ENCODE measurements at regions of chr20 and their contacts with region 1.

Region 1: GRCh38 chr20:45880988-45881788 is at the start of gene ZSWIM1:
- DNase-seq: peak; percentile 99
- ATAC-seq: peak; percentile 98
- H3K4me3 Mint-ChIP-seq: peak within 1 kb of the TSS; percentile 94
- H3K27ac Mint-ChIP-seq: peak within 1 kb of the TSS; percentile 95
- H3K4me1 Mint-ChIP-seq: peaks cover 42% of the 10 kb centered on the region
- H3K27me3 Mint-ChIP-seq: no peaks in the 10 kb centered on the region
- total RNA-seq, gene ZSWIM1: 9.4 to 10.7 TPM

Region 2: GRCh38 chr20:45890985-45891983 is 10.1 kb after region 1 on chr20 and contains the starts of genes CTSA and NEURL2:
- CTCF ChIA-PET with region 1: interaction called, 10 read pairs
- POLR2A ChIA-PET with region 1: interaction called, 7 read pairs
- intact Hi-C with region 1: loop called (anchors 1 kb)
- DNase-seq: peak; percentile 94
- ATAC-seq: peak; percentile 80
- H3K4me3 Mint-ChIP-seq: peak within 1 kb of the TSS; percentile 89
- H3K27ac Mint-ChIP-seq: peak within 1 kb of the TSS; percentile 87
- H3K4me1 Mint-ChIP-seq: peaks cover 32% of the 10 kb centered on the region
- H3K27me3 Mint-ChIP-seq: no peaks in the 10 kb centered on the region
- total RNA-seq, gene CTSA: 36.4 to 45.6 TPM
- total RNA-seq, gene NEURL2: 1.2 to 1.9 TPM

Region 3: DNA sequence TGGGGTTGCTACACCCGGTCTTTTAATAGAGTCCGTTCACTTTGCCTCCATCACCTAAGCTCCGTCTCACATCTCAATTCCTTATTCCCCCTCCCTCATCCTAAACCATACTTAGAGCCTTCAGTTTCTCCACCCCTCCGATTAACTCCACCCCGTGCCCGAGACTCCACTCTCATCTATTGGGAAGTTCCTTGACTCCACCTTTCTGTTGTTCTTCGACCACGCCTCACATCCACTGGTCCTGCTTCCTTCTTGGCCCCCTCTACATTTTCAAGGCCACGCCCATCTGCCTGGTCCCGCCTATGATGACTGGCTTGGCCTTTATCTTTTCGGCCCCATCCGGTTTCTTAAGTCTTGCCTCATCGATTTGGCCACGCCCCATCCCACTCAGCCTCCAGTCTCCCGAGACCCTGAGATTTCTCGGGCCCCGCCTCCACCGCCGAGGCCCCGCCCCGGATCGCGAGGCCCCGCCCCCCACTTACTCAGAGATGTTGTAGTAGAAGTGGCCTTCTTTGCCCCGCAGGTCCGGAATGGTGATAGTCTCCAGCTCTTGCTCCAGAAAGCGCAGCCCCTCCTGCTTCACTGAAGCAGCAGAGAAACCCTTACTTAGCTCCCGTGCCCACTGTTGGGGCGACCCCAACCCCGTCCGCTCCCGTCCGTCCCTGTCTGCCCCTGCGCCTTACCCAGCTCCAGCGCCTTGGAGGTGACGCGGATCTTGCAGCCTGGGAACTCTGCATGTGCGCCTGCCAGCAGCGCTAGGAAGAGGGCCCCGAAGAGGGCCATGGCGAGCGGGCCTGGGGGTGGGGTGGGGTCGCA is 29.7 kb after region 1 on chr20:
- CTCF ChIA-PET with region 1: no interaction called
- POLR2A ChIA-PET with region 1: no interaction called
- intact Hi-C with region 1: loop called in 1 of 2 experiments (anchors 1 kb)
- DNase-seq: peak; percentile 98
- ATAC-seq: peak; percentile 92
- H3K4me3 Mint-ChIP-seq: peak overlapping the region; percentile 68
- H3K27ac Mint-ChIP-seq: peak overlapping the region; percentile 80
- H3K4me1 Mint-ChIP-seq: peaks cover 16% of the 10 kb centered on the region
- H3K27me3 Mint-ChIP-seq: peaks cover 12% of the 10 kb centered on the region

Region 4: GRCh38 chr20:46406199-46406985 is 525.2 kb after region 1 on chr20 and contains the start of gene ELMO2:
- CTCF ChIA-PET with region 1: no interaction called
- POLR2A ChIA-PET with region 1: no interaction called
- intact Hi-C with region 1: loop called in 1 of 2 experiments (anchors 1 kb)
- DNase-seq: peak; percentile 98
- ATAC-seq: peak; percentile 85
- H3K4me3 Mint-ChIP-seq: peak within 1 kb of the TSS; percentile 88
- H3K27ac Mint-ChIP-seq: peak within 1 kb of the TSS; percentile 85
- H3K4me1 Mint-ChIP-seq: peaks cover 65% of the 10 kb centered on the region
- H3K27me3 Mint-ChIP-seq: no peaks in the 10 kb centered on the region
- total RNA-seq, gene ELMO2: 47.4 to 54.6 TPM